ENCODE measurements at regions of chr7 and their contacts with region 1.

Region 1: GRCh38 chr7:112789817-112790585 is at the start of gene TMEM168:
- DNase-seq: peak; percentile 81
- ATAC-seq: peak; percentile 83
- H3K4me3 Mint-ChIP-seq: peak within 1 kb of the TSS; percentile 91
- H3K27ac Mint-ChIP-seq: peak within 1 kb of the TSS; percentile 94
- H3K4me1 Mint-ChIP-seq: peaks cover 27% of the 10 kb centered on the region
- H3K27me3 Mint-ChIP-seq: no peaks in the 10 kb centered on the region
- CTCF ChIP-seq: no peak
- total RNA-seq, gene TMEM168: 22.1 and 24.2 TPM in 2 replicates

Region 2: DNA sequence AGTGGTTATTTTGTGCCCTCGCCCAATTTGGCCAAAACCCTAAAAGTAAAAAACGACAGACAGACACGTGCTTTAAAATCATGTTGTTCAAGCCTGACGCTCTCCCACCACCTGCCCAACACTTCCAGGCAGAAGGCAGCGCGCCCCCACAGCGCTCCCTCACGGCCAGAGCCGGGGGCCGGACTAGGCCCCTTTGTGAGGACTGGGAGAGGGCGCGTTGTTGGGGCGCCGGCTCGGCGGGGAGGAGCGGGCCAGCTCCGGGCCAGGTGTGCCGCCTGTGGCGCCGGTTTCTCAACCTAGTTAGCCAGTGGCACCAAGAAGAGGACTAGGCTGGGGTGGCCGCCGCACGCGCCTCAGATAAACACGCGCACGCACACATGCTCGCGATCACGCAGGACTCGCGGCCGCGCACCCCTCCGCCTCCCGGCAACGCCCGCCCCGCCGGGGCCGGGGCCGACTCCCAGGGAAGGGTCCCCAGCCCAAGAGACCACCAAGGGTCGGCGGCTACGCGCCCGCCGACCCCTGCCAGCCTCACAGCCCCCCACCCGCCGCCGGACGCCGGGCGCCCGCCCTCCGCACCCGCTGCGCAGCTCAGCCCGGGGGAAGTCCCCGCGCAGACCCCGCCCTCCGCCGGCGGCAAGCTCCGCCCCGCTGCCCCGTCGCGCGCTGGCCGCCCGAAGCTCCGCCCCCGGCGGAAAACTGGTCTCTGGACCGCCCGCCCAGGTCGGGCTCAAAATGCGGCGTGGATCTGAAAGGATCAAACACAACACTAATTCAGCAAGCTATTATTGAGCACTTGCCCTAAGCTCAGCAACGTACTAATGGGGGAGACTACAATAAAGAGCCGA is 1227.9 kb before region 1 on chr7 and contains the start of gene IMMP2L:
- CTCF ChIA-PET with region 1: no interaction called
- POLR2A ChIA-PET with region 1: no interaction called
- intact Hi-C with region 1: loop called (anchors 5 kb)
- DNase-seq: peak; percentile 98
- ATAC-seq: peak; percentile 95
- H3K4me3 Mint-ChIP-seq: peak within 1 kb of the TSS; percentile 87
- H3K27ac Mint-ChIP-seq: peak within 1 kb of the TSS; percentile 88
- H3K4me1 Mint-ChIP-seq: peaks cover 32% of the 10 kb centered on the region
- H3K27me3 Mint-ChIP-seq: peaks cover 3% of the 10 kb centered on the region
- CTCF ChIP-seq: no peak
- total RNA-seq, gene IMMP2L: 28.5 and 31.9 TPM in 2 replicates

Region 3: GRCh38 chr7:112157072-112157471 is 632.9 kb before region 1 on chr7:
- CTCF ChIA-PET with region 1: no interaction called
- POLR2A ChIA-PET with region 1: no interaction called
- intact Hi-C with region 1: no loop called
- DNase-seq: no peak
- ATAC-seq: no peak
- H3K4me3 Mint-ChIP-seq: no peak overlapping the region
- H3K27ac Mint-ChIP-seq: no peak overlapping the region
- H3K4me1 Mint-ChIP-seq: peaks cover 4% of the 10 kb centered on the region
- H3K27me3 Mint-ChIP-seq: no peaks in the 10 kb centered on the region
- CTCF ChIP-seq: no peak

Region 4: DNA sequence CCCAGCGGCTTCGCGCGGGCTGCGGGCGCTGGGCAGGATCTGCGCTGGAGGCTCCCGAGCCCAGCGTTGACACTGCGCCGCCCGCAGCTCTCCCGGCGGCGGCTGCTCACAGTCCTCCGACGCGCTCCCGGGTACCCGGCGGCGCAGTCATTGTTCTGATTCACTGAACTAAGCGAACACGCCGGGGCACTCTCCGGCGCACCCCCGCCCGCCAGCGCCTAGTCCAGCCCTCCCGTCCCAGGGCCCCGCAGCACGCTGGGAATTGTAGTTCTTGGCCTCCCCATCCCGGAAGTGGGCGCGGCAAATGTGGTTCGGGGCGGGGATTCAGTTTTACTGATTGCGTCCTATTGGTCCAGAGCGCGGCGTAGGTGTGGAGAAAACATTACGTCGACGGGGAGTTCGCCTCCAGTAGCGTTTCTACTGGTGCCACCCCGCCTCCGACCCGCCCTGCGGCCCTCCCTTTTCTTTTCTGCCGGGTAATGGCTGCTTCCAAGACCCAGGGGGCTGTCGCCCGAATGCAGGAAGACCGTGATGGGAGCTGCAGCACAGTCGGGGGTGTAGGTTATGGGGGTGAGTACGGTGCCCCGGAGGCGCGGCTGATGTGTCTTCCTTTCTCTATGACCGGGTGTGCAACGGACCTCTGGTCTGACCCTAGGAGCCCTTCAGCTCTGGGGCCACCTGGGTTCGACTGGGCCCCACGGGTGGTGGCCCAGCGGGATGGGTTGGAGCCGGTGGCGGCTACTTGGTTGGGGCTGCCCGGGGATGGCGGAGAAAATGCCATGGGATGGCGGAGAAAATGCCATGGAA is 583.6 kb before region 1 on chr7 and contains the starts of genes DOCK4 and ZNF277:
- CTCF ChIA-PET with region 1: no interaction called
- POLR2A ChIA-PET with region 1: no interaction called
- intact Hi-C with region 1: loop called (anchors 10 kb)
- DNase-seq: peak; percentile 99
- ATAC-seq: peak; percentile 90
- H3K4me3 Mint-ChIP-seq: peak within 1 kb of the TSS; percentile 97
- H3K27ac Mint-ChIP-seq: peak within 1 kb of the TSS; percentile 83
- H3K4me1 Mint-ChIP-seq: peaks cover 37% of the 10 kb centered on the region
- H3K27me3 Mint-ChIP-seq: peaks cover 25% of the 10 kb centered on the region
- CTCF ChIP-seq: no peak
- total RNA-seq, gene DOCK4: 0.61 and 0.73 TPM in 2 replicates
- total RNA-seq, gene ZNF277: 12.6 and 13.1 TPM in 2 replicates

Region 5: GRCh38 chr7:112449902-112450806 is 339.8 kb before region 1 on chr7 and contains the start of gene IFRD1:
- CTCF ChIA-PET with region 1: no interaction called
- POLR2A ChIA-PET with region 1: interaction called, 12 read pairs
- intact Hi-C with region 1: loop called (anchors 1 kb)
- DNase-seq: peak; percentile 99
- ATAC-seq: peak; percentile 81
- H3K4me3 Mint-ChIP-seq: peak within 1 kb of the TSS; percentile 99
- H3K27ac Mint-ChIP-seq: peak within 1 kb of the TSS; percentile 99
- H3K4me1 Mint-ChIP-seq: peaks cover 36% of the 10 kb centered on the region
- H3K27me3 Mint-ChIP-seq: no peaks in the 10 kb centered on the region
- CTCF ChIP-seq: no peak
- total RNA-seq, gene IFRD1: 58.7 and 67.0 TPM in 2 replicates

Region 6: GRCh38 chr7:112869111-112869757 is 79.2 kb after region 1 on chr7:
- CTCF ChIA-PET with region 1: no interaction called
- POLR2A ChIA-PET with region 1: no interaction called
- intact Hi-C with region 1: loop called (anchors 2 kb)
- DNase-seq: no peak
- ATAC-seq: peak; percentile 76
- H3K4me3 Mint-ChIP-seq: no peak overlapping the region
- H3K27ac Mint-ChIP-seq: no peak overlapping the region
- H3K4me1 Mint-ChIP-seq: peaks cover 42% of the 10 kb centered on the region
- H3K27me3 Mint-ChIP-seq: no peaks in the 10 kb centered on the region
- CTCF ChIP-seq: peak; percentile 61

Region 7: DNA sequence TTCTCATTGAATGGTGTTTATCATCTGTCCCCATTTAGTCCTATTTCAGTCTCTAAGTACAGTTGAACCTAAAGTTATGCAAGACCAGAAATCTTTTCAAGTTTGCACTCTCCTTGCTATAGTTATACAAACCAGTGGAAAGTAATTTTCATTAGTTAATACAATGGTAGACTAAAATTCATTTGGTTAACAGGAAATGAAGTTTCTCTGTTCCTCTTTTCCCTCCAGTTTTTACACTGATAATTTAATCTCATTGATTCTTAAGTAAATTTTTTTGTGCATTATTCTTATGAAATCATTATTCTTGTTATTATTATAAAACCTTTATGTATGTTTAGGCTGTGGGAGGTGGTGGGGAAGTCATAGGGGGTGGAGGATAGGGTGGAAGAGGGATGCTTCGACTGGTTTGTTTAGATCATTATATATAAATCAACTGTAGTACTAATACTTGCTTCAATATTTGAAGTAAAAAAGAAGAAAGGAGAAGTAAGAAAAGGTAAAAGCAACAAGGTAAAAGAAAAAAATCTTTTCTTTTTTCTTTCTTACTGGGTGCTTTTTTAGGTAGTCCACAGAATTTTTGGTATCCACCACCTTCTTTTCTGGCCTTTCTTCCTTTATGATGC is 192.6 kb after region 1 on chr7:
- CTCF ChIA-PET with region 1: no interaction called
- POLR2A ChIA-PET with region 1: no interaction called
- intact Hi-C with region 1: loop called (anchors 1 kb)
- DNase-seq: no peak
- ATAC-seq: peak; percentile 62
- H3K4me3 Mint-ChIP-seq: no peak overlapping the region
- H3K27ac Mint-ChIP-seq: peak overlapping the region; percentile 79
- H3K4me1 Mint-ChIP-seq: peaks cover 28% of the 10 kb centered on the region
- H3K27me3 Mint-ChIP-seq: no peaks in the 10 kb centered on the region
- CTCF ChIP-seq: no peak